Transverse colon (tissue), 4 donors: ENCODE measurements at regions of chr1 and their contacts with region 1.

Region 1: GRCh38 chr1:37474046-37474759 is at the start of gene ZC3H12A:
- DNase-seq: peak; percentile 96
- H3K4me3 ChIP-seq: peak within 1 kb of the TSS; percentile 80 to 89 (median 82)
- H3K27ac ChIP-seq: peak within 1 kb of the TSS; percentile 94 to 98 (median 98)
- H3K4me1 ChIP-seq: peaks cover 35 to 72% (median 69%) of the 10 kb centered on the region in 4 donors
- H3K27me3 ChIP-seq: no peaks in the 10 kb centered on the region
- CTCF ChIP-seq: no peak
- EP300 ChIP-seq: no peak
- POLR2A ChIP-seq: peak; percentile 95
- total RNA-seq, gene ZC3H12A: 5.8 to 41.9 (median 28.8) TPM

Region 2: DNA sequence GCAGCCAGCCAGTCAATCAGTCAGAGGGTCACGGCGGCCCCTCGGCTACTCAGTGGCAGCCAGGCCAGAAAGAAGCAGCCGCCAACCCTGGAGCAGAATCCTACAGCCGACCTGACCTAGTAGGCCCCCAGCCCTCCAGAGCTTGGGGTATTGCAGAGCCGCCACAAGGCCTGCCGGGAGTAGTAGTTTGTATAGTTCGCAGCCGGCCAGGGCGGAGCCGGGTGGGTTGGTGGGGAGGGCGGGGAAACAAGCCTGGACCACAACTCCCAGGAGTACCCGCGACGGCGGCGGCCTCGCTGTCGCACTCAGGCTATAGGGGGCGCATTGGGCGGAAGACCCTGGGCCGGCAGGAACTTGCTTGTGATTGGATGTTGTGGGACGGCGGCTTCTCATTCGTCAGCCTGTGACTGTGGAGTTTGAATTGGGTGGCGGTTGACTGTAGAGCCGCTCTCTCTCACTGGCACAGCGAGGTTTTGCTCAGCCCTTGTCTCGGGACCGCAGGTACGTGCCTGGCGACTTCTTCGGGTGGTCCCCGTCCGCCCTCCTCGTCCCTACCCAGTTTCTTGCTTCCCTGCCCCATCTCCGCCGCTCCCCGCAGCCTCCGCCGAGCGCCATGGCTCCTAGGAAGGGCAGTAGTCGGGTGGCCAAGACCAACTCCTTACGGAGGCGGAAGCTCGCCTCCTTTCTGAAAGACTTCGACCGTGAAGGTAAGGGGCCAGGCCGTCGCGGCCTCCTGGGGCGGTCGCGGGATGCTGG is 218.1 kb after region 1 on chr1 and contains the start of gene CDCA8:
- in situ Hi-C with region 1: loop called in 2 of 4 experiments (anchors 25 kb)
- intact Hi-C with region 1: loop called (anchors 5 kb)
- DNase-seq: peak; percentile 99
- H3K4me3 ChIP-seq: peak within 1 kb of the TSS; percentile 57 to 96 (median 72)
- H3K27ac ChIP-seq: peak within 1 kb of the TSS; percentile 83 to 94 (median 88)
- H3K4me1 ChIP-seq: peaks cover 17 to 44% (median 31%) of the 10 kb centered on the region in 4 donors
- H3K27me3 ChIP-seq: no peaks in the 10 kb centered on the region
- CTCF ChIP-seq: peak; percentile 17 to 58 (median 41)
- EP300 ChIP-seq: no peak
- POLR2A ChIP-seq: peak; percentile 43
- total RNA-seq, gene CDCA8: 2.0 to 5.7 (median 2.1) TPM in 3 of 4 donors, not detected in the other